ENCODE measurements at regions of chr1 and their contacts with region 1.

Region 1: GRCh38 chr1:99662581-99663208 is 16.8 kb downstream of the PALMD start:
- DNase-seq: no peak
- H3K4me3 Mint-ChIP-seq: no peak overlapping the region
- H3K27ac Mint-ChIP-seq: no peak overlapping the region
- H3K4me1 Mint-ChIP-seq: no peaks in the 10 kb centered on the region
- H3K27me3 Mint-ChIP-seq: peaks cover 17% of the 10 kb centered on the region

Region 2: DNA sequence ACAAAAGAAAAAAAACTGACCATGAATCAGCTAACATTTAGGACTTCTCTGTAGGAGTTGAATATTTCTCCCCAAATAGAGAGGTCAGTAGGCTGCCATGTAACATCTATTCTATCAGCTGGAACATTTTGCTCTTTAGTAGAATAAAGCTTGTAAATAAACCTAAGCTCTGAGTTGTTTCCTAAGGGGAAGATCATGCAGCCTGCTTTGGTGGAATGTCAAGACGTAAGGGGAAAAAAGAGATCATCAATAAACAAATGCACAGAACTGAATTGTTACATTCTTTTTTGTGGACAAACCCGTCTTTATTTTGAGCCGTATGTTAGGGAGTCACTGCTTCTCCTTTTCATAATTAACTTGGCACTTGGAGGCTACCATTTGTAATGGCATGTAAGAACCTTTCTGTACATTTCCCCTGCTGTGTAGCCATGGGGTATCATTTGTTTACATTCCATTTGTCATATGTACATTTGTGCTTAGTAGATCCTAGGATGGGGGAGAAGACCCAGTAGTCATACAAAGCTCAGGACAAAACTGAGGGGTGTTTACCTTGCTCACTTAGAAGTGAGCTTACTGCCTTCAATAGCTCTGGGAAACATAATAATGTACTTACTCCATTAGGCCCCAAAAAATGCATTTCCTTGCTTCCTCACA is 27.6 kb before region 1 on chr1:
- intact Hi-C with region 1: loop called (anchors 1 kb)
- DNase-seq: no peak
- H3K4me3 Mint-ChIP-seq: no peak overlapping the region
- H3K27ac Mint-ChIP-seq: no peak overlapping the region
- H3K4me1 Mint-ChIP-seq: no peaks in the 10 kb centered on the region
- H3K27me3 Mint-ChIP-seq: no peaks in the 10 kb centered on the region

Measured in activated T-helper 2 cell treated with anti-CD3 and anti-CD28 coated beads, Interferon-gamma antibody, Interleukin-2, Interleukin-4, amounts not matched to agents 10 μg/mL and 5 μg/mL and 100 μg/mL, durations not matched to agents 14 hours and 24 hours and 36 hours (primary cell).